ENCODE measurements at regions of chr15 and their contacts with region 1.

Region 1: DNA sequence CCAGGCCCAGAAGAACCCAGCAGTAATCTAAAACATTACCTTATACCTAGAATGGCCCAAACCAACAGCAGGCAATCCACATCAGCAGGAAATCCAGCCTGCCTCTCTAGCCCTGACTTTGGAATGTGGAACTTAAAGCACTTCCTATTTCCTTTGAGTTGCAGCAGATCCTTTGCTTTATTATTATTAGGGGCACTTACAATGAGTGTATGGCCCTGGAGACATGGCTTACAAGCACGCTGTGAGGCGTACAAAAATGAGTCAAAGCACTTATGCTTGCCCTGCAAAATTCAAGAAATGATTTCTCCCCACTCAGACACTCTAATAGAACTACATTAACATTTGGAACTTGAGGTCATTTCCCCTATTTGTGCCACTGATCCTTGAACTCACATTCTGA is 9.5 kb upstream of the KNSTRN start:
- DNase-seq: no peak
- ATAC-seq: no peak
- H3K4me3 ChIP-seq: no peak overlapping the region
- H3K27ac ChIP-seq: no peak overlapping the region
- H3K4me1 ChIP-seq: peaks cover 0 to 15% (median 4%) of the 10 kb centered on the region in 12 donors
- H3K27me3 ChIP-seq: no peaks in the 10 kb centered on the region
- CTCF ChIP-seq: no peak
- POLR2A ChIP-seq: no peak

Region 2: DNA sequence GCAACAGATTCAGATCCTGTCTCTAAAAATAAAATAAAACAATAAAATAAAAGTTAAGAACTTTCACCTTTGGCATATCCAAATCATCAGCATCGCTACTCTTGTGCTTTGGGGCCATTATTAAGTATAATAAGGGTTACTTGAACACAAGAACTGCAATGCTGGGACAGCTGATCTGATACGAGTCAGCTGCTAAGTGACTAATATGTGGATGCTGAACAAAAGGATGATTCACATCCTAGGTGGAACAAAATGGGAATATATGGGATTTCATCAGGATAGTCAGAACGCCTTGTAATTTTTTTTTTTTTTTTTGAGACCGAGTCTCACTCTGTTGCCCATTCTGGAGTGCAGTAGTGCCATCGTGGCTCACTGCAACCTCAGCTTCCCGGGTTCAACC is 182.4 kb before region 1 on chr15:
- intact Hi-C with region 1: no loop called
- DNase-seq: no peak
- ATAC-seq: no peak
- H3K4me3 ChIP-seq: no peak overlapping the region
- H3K27ac ChIP-seq: no peak overlapping the region
- H3K4me1 ChIP-seq: no peaks in the 10 kb centered on the region
- H3K27me3 ChIP-seq: no peaks in the 10 kb centered on the region
- CTCF ChIP-seq: no peak
- POLR2A ChIP-seq: no peak

Region 3: GRCh38 chr15:40412095-40412759 is 39.2 kb after region 1 on chr15:
- intact Hi-C with region 1: loop called in 3 of 10 experiments (anchors 5 to 10 kb)
- DNase-seq: no peak
- ATAC-seq: peak in 1 of 4 donors; percentile 30
- H3K4me3 ChIP-seq: no peak overlapping the region
- H3K27ac ChIP-seq: no peak overlapping the region
- H3K4me1 ChIP-seq: peaks cover 0 to 10% (median under 1%) of the 10 kb centered on the region in 12 donors
- H3K27me3 ChIP-seq: no peaks in the 10 kb centered on the region
- CTCF ChIP-seq: no peak
- POLR2A ChIP-seq: no peak

Measured in heart left ventricle (tissue), 16 donors.